ENCODE measurements at regions of chr4 and their contacts with region 1.

Region 1: GRCh38 chr4:122617597-122618593 is 3.0 kb downstream of the IL21 start:
- DNase-seq: no peak
- H3K4me3 Mint-ChIP-seq: peak overlapping the region; percentile 93
- H3K27ac Mint-ChIP-seq: peak overlapping the region; percentile 93
- H3K4me1 Mint-ChIP-seq: peaks cover 67% of the 10 kb centered on the region
- H3K27me3 Mint-ChIP-seq: no peaks in the 10 kb centered on the region

Region 2: GRCh38 chr4:122027203-122027602 is 590.7 kb before region 1 on chr4:
- intact Hi-C with region 1: no loop called
- DNase-seq: no peak
- H3K4me3 Mint-ChIP-seq: no peak overlapping the region
- H3K27ac Mint-ChIP-seq: no peak overlapping the region
- H3K4me1 Mint-ChIP-seq: no peaks in the 10 kb centered on the region
- H3K27me3 Mint-ChIP-seq: peaks cover 2% of the 10 kb centered on the region

Region 3: DNA sequence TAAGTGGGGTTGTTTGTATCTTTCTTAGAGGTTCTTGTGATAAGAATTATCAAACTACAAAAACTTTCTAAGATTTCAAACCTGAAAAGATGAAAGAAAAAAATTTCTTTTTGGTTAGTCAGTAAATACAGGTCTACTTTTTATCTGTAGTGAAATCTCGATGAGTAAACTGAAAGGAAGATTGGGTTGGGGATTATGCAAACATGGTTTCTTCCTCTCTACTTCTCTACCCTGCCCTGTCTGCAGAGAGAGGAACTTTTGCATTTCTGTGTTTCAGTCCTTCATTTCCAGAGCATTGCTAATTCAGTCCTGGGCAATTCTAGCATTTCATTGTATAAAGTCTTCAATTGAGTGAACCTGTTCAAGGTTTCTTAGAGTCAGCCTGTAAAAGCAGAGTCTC is 109.8 kb before region 1 on chr4:
- intact Hi-C with region 1: loop called (anchors 1 kb)
- DNase-seq: no peak
- H3K4me3 Mint-ChIP-seq: peak overlapping the region; percentile 71
- H3K27ac Mint-ChIP-seq: peak overlapping the region; percentile 89
- H3K4me1 Mint-ChIP-seq: peaks cover 69% of the 10 kb centered on the region
- H3K27me3 Mint-ChIP-seq: no peaks in the 10 kb centered on the region

Region 4: DNA sequence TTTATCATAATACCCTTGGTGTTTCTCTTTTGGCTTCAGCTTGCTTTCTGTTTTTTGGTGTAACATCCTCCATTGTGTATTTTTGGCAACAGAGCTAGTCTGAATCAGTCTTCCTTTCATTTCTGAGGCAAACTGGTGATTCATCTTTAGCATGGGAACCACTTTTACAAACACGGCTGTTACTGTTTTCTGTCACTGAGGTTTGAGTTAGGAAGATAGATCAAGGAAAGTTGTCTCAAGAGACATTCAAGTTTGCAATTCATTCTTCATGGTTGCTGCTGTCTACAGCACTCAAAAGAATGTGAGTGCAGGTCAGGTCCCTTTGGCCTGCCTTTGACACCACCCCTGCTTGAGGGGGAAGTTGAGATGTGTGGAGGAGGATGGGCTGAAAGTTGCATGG is 33.4 kb before region 1 on chr4:
- intact Hi-C with region 1: loop called (anchors 1 kb)
- DNase-seq: peak; percentile 38
- H3K4me3 Mint-ChIP-seq: peak overlapping the region; percentile 62
- H3K27ac Mint-ChIP-seq: peak overlapping the region; percentile 94
- H3K4me1 Mint-ChIP-seq: peaks cover 70% of the 10 kb centered on the region
- H3K27me3 Mint-ChIP-seq: peaks cover 3% of the 10 kb centered on the region

Region 5: DNA sequence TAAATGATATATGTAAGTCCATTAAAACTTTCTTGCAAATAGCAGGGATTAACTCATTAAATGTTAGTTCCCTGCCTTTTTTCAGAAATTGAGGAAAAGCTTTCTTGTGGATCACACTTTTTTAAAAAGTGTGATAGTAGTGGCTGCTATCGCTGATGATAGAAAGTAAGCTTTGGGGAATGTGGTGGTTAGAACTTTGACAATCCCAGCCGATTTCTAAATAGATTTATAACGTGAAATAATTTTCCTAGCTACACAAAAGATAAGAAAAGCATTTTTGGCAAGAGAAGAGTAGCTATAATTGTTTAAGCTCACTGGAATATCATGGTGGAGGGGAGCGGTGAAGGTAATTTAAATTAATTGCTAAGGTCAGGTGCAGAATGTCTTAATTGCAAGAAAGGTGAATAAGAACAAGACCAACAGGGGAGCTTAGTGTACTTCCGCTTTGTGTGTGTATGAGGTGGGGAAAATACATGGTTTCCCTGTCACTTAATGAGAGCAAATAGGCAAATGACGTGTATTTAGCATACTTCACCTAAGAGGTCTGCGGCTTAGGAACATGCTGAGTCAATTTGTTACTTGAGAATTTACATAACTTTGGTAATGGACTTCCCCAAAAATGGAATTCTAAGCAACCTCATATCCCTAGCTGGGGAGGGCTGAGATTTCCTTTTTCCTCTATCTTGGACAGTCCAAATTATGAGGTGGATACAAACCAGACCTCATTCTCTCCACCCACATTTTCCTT is 14.7 kb after region 1 on chr4:
- intact Hi-C with region 1: loop called (anchors 1 kb)
- DNase-seq: no peak
- H3K4me3 Mint-ChIP-seq: no peak overlapping the region
- H3K27ac Mint-ChIP-seq: peak overlapping the region; percentile 75
- H3K4me1 Mint-ChIP-seq: peaks cover 35% of the 10 kb centered on the region
- H3K27me3 Mint-ChIP-seq: no peaks in the 10 kb centered on the region

Region 6: GRCh38 chr4:122666527-122667245 is 48.8 kb after region 1 on chr4:
- intact Hi-C with region 1: loop called (anchors 1 kb)
- DNase-seq: no peak
- H3K4me3 Mint-ChIP-seq: peak overlapping the region; percentile 69
- H3K27ac Mint-ChIP-seq: peak overlapping the region; percentile 74
- H3K4me1 Mint-ChIP-seq: peaks cover 88% of the 10 kb centered on the region
- H3K27me3 Mint-ChIP-seq: no peaks in the 10 kb centered on the region

Region 7: GRCh38 chr4:122710434-122711308 is 92.8 kb after region 1 on chr4:
- intact Hi-C with region 1: loop called (anchors 1 kb)
- DNase-seq: peak; percentile 31
- H3K4me3 Mint-ChIP-seq: peak overlapping the region; percentile 67
- H3K27ac Mint-ChIP-seq: peak overlapping the region; percentile 97
- H3K4me1 Mint-ChIP-seq: peaks cover 83% of the 10 kb centered on the region
- H3K27me3 Mint-ChIP-seq: peaks cover 2% of the 10 kb centered on the region

Region 8: DNA sequence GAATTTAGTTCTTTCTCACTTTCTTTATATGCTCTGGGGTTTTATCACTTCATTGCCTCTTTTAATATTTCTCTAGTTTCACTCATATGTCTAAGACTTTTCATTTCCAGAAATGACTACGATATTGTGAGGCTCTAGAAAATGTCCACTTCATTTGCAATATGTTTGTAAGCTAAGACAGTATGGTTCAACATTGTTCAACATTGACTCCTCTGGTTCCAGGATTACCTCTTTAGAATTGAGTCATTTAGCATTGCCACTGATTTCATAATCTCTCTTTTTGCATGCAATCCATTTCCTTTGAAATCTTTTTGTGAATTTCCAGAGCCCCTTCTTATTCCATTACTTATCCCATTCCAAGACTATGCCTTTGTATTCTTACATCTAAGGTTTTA is 146.9 kb after region 1 on chr4:
- intact Hi-C with region 1: loop called (anchors 1 kb)
- DNase-seq: no peak
- H3K4me3 Mint-ChIP-seq: peak overlapping the region; percentile 43
- H3K27ac Mint-ChIP-seq: peak overlapping the region; percentile 79
- H3K4me1 Mint-ChIP-seq: peaks cover 45% of the 10 kb centered on the region
- H3K27me3 Mint-ChIP-seq: no peaks in the 10 kb centered on the region